CD14-positive monocyte (primary cell): ENCODE measurements at regions of chr1 and their contacts with region 1.

Region 1: DNA sequence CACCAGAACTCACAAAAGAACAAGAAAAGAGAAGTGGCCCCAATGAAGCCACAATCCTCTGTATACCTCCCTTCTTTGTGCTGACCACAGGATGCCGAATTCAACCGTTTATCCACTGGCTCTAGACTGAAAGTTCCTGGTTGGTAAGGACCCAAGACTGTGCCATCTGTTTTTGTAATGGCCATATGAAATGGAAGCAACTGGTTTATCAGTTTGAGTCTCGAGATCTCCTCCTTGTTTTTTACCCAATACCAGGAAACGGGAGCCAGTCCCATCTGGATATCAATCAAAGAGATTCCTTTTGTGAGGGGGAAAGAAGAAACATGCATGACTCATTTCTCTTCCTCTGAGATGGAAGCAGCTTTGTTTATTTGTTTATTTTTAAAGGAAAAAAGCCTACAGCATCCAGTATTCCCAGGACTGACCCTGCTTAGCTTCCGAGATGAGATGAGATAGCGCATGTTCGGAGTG is 32.4 kb upstream of the ZNF124 start:
- DNase-seq: no peak
- H3K4me3 ChIP-seq: no peak overlapping the region
- H3K4me3 Mint-ChIP-seq: no peak overlapping the region
- H3K27ac ChIP-seq: no peak overlapping the region
- H3K27ac Mint-ChIP-seq: peak overlapping the region in 1 of 7 donors; percentile 10
- H3K4me1 ChIP-seq: peaks cover 4 to 9% of the 10 kb centered on the region in 2 donors
- H3K4me1 Mint-ChIP-seq: peaks cover 14% of the 10 kb centered on the region
- H3K27me3 ChIP-seq: no peaks in the 10 kb centered on the region
- H3K27me3 Mint-ChIP-seq: peaks cover 0 to 1% (median 0%) of the 10 kb centered on the region in 3 donors
- CTCF ChIP-seq: no peak

Region 2: DNA sequence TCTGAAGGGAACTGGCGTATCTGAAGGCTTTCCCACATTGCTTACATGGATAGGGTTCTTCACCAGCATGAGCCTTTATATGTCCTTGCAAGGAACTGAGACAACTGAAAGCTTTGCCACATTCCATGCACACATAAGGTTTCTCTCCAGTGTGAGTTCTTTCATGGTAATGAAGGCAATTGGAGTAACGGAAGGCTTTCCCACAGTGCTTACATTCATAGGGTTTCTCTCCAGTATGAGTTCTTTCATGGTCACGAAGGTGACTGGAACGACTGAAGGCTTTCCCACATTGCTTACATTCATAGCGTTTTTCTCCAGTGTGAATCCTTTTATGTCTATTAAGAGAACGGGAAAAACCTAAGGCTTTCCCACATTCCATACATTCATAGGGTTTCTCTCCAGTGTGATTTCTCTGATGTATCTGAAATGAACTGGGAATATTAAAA is 47.4 kb before region 1 on chr1:
- intact Hi-C with region 1: loop called in 1 of 2 experiments (anchors 5 kb)
- DNase-seq: no peak
- H3K4me3 ChIP-seq: peak overlapping the region in 1 of 3 experiments; percentile 44
- H3K4me3 Mint-ChIP-seq: no peak overlapping the region
- H3K27ac ChIP-seq: no peak overlapping the region
- H3K27ac Mint-ChIP-seq: no peak overlapping the region
- H3K4me1 ChIP-seq: no peaks in the 10 kb centered on the region
- H3K4me1 Mint-ChIP-seq: no peaks in the 10 kb centered on the region
- H3K27me3 ChIP-seq: no peaks in the 10 kb centered on the region
- H3K27me3 Mint-ChIP-seq: peaks cover 0 to 2% (median 0%) of the 10 kb centered on the region in 3 donors
- CTCF ChIP-seq: no peak

Region 3: DNA sequence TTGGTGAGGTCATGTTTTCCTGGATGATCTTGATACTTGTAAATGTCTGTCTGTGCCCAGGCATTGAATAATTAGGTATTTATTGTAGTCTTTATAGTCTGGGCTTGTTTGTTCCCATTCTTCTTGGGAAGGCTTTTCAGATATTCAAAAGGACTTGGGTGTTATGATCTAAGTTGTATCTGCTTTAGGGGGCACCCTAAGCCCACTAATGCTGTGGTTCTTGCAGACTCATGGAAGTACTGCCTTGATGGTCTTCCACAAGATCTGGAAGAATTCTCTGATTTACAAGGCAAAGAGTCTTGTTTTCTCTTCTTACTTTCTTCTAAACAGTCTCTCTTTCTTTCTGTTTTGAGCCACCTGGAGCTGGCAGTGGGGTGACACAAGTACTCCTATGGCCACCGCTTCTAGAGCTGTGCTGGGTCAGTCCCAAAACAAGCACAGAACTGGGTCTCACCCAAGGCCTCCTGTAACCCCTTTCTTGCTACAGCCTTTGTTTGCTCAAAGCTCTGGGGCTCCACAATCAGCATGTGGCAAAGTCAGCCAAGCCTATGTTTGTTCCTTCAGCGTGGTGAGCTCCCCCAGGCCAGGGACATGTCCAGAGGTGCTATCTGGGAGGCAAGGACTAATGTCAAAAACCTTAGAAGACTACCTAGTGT is 64.3 kb after region 1 on chr1:
- intact Hi-C with region 1: no loop called
- DNase-seq: no peak
- H3K4me3 ChIP-seq: no peak overlapping the region
- H3K4me3 Mint-ChIP-seq: no peak overlapping the region
- H3K27ac ChIP-seq: no peak overlapping the region
- H3K27ac Mint-ChIP-seq: no peak overlapping the region
- H3K4me1 ChIP-seq: no peaks in the 10 kb centered on the region
- H3K4me1 Mint-ChIP-seq: no peaks in the 10 kb centered on the region
- H3K27me3 ChIP-seq: no peaks in the 10 kb centered on the region
- H3K27me3 Mint-ChIP-seq: peaks cover 0 to 3% (median 2%) of the 10 kb centered on the region in 3 donors
- CTCF ChIP-seq: no peak